GM10248 (cell line): ENCODE measurements at regions of chr2 and their contacts with region 1.

Region 1: GRCh38 chr2:209334198-209335017 is 89.4 kb upstream of the MAP2 start:
- DNase-seq: peak; percentile 29
- CTCF ChIP-seq: peak; percentile 70

Region 2: GRCh38 chr2:209311948-209312347 is 22.5 kb before region 1 on chr2:
- CTCF ChIA-PET with region 1: interaction called, 12 read pairs
- POLR2A ChIA-PET with region 1: no interaction called
- DNase-seq: no peak
- CTCF ChIP-seq: no peak

Region 3: GRCh38 chr2:209351636-209352035 is 17.2 kb after region 1 on chr2:
- CTCF ChIA-PET with region 1: interaction called, 35 read pairs
- POLR2A ChIA-PET with region 1: no interaction called
- DNase-seq: no peak
- CTCF ChIP-seq: no peak

Region 4: GRCh38 chr2:209549589-209549988 is 215.2 kb after region 1 on chr2:
- CTCF ChIA-PET with region 1: interaction called, 23 read pairs
- POLR2A ChIA-PET with region 1: no interaction called
- DNase-seq: no peak
- CTCF ChIP-seq: no peak

Region 5: GRCh38 chr2:209636076-209636475 is 301.7 kb after region 1 on chr2:
- CTCF ChIA-PET with region 1: no interaction called
- POLR2A ChIA-PET with region 1: no interaction called
- DNase-seq: no peak
- CTCF ChIP-seq: no peak

Region 6: GRCh38 chr2:209960676-209961630 is 626.5 kb after region 1 on chr2:
- CTCF ChIA-PET with region 1: interaction called, 17 read pairs
- POLR2A ChIA-PET with region 1: no interaction called
- DNase-seq: peak; percentile 40
- CTCF ChIP-seq: peak; percentile 63